ENCODE measurements at regions of chr4 and their contacts with region 1.

Region 1: GRCh38 chr4:94595879-94596483 is 144.2 kb downstream of the PDLIM5 start:
- ATAC-seq: peak in 3 of 8 experiments; percentile 49 to 59 (median 53)
- H3K4me3 ChIP-seq: no peak overlapping the region
- H3K27ac ChIP-seq: no peak overlapping the region
- H3K4me1 ChIP-seq: no peaks in the 10 kb centered on the region

Region 2: GRCh38 chr4:94304365-94304971 is 291.5 kb before region 1 on chr4:
- in situ Hi-C with region 1: loop called in 1 of 9 experiments (anchors 25 kb)
- ATAC-seq: peak in 4 of 8 experiments; percentile 46 to 67 (median 60)
- H3K4me3 ChIP-seq: no peak overlapping the region
- H3K27ac ChIP-seq: no peak overlapping the region
- H3K4me1 ChIP-seq: peaks cover 0 to 3% of the 10 kb centered on the region in 2 donors

Region 3: DNA sequence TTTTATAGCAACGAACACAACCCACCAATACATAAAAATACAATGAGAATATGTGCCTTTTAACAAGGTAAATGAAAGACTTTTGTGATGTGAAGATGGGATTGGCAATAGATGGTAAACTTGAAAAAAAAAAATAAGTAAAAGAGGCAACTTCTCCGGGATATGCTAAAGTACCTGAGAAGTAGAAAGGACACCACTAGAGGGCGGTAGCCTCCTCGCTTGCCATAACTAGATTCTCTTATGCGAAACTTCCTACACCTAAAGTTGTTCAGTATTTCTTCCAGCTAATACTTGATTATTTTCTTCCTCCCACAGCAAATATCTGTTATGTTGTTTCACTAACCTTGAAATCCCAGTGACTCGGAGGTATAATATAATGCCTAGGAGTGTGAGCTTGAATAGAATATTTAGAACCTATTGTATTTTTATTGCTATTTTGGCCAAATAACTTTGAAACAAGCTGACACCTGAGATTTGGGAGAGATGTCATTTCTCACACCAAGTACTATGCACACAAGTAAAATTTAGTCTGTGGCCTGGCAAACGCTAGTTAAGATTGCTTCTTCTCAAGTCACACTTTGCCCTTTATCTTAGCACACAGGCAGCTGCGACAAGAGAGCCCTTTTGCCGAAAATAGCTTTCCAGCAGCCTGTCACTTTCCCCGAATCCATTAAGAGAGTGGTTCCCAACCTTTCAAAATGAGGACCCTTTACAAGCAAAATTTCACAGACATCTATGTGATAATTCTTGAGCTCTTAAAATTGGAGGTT is 189.1 kb before region 1 on chr4:
- in situ Hi-C with region 1: loop called in 4 of 9 experiments (anchors 25 kb)
- ATAC-seq: peak in 6 of 8 experiments; percentile 45 to 85 (median 66)
- H3K4me3 ChIP-seq: no peak overlapping the region
- H3K27ac ChIP-seq: no peak overlapping the region
- H3K4me1 ChIP-seq: peaks cover 0 to 3% of the 10 kb centered on the region in 2 donors

Region 4: DNA sequence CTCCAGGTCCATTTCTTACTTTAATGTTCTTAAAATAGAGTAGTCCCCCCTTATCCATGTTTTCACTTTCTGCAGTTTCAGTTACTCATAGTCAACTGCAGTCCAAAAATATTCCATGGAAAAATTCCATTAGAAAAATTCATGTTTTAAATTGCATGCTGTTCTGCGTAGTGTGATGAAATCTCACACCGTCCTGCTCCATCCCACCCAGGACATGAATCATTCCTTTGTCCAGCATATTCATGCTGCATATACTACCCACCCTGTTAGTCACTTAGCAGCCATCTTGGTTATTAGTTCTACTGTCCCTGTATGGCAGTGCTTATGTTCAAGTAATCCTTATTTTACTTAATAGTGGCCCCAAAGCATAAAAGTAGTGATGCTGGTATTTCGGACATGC is 149.6 kb before region 1 on chr4:
- in situ Hi-C with region 1: loop called in 1 of 9 experiments (anchors 25 kb)
- ATAC-seq: peak in 4 of 8 experiments; percentile 18 to 98 (median 96)
- H3K4me3 ChIP-seq: no peak overlapping the region
- H3K27ac ChIP-seq: no peak overlapping the region
- H3K4me1 ChIP-seq: peaks cover 0 to 2% of the 10 kb centered on the region in 2 donors